HepG2 (cell line): ENCODE measurements at regions of chr6 and their contacts with region 1.

Region 1: DNA sequence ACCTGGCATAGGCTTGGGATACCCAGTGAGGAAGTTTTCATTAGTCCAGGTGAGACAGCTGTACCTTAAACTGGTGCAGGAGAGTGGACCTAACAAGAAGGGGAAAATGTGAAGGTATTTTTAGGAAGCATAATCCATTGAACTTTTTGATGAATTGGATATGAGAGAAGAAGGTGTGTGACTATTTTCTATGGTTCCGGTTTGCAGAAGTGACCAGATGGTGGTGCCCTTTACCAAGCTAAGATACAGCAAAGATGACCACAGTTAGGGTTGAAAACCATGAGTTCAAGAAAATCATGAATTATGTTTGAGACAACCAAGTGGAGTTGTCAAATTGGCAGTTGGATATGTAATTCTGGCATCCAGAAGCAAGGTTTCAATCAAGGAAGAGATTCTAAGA is 61.9 kb upstream of the NRSN1 start:
- DNase-seq: peak; percentile 62
- ATAC-seq: peak; percentile 92
- H3K4me3 ChIP-seq: no peak overlapping the region
- H3K27ac ChIP-seq: no peak overlapping the region
- H3K4me1 ChIP-seq: no peaks in the 10 kb centered on the region
- H3K27me3 ChIP-seq: no peaks in the 10 kb centered on the region
- CTCF ChIP-seq: peak; percentile 87
- EP300 ChIP-seq: no peak
- POLR2A ChIP-seq: no peak
- RAD21 ChIP-seq: peak; percentile 87

Region 2: GRCh38 chr6:24147511-24148149 is 83.5 kb after region 1 on chr6:
- CTCF ChIA-PET with region 1: no interaction called
- POLR2A ChIA-PET with region 1: no interaction called
- in situ Hi-C with region 1: no loop called
- intact Hi-C with region 1: loop called (anchors 5 kb)
- DNase-seq: no peak
- ATAC-seq: no peak
- H3K4me3 ChIP-seq: peak overlapping the region in 1 of 3 experiments; percentile 15; a peak in 1 of 6 replicates
- H3K27ac ChIP-seq: peak overlapping the region; percentile 84
- H3K4me1 ChIP-seq: peaks cover 55% of the 10 kb centered on the region
- H3K27me3 ChIP-seq: no peaks in the 10 kb centered on the region
- CTCF ChIP-seq: no peak
- EP300 ChIP-seq: no peak
- POLR2A ChIP-seq: no peak; a peak in 1 of 4 replicates
- RAD21 ChIP-seq: no peak

Region 3: GRCh38 chr6:24183596-24183995 is 119.5 kb after region 1 on chr6:
- CTCF ChIA-PET with region 1: no interaction called
- POLR2A ChIA-PET with region 1: no interaction called
- in situ Hi-C with region 1: no loop called
- intact Hi-C with region 1: no loop called
- DNase-seq: no peak
- ATAC-seq: no peak; the same call in 2 of the 3 replicates
- H3K4me3 ChIP-seq: no peak overlapping the region
- H3K27ac ChIP-seq: no peak overlapping the region
- H3K4me1 ChIP-seq: no peaks in the 10 kb centered on the region
- H3K27me3 ChIP-seq: no peaks in the 10 kb centered on the region
- CTCF ChIP-seq: no peak
- EP300 ChIP-seq: no peak
- POLR2A ChIP-seq: no peak
- RAD21 ChIP-seq: no peak

Region 4: GRCh38 chr6:24205020-24205492 is 141.0 kb after region 1 on chr6:
- CTCF ChIA-PET with region 1: interaction called, 42 read pairs
- POLR2A ChIA-PET with region 1: no interaction called
- in situ Hi-C with region 1: no loop called
- intact Hi-C with region 1: loop called (anchors 1 kb)
- DNase-seq: peak; percentile 59
- ATAC-seq: peak; percentile 99
- H3K4me3 ChIP-seq: peak overlapping the region in 1 of 3 experiments; percentile 18; a peak in 1 of 6 replicates
- H3K27ac ChIP-seq: peak overlapping the region; percentile 53
- H3K4me1 ChIP-seq: peaks cover 40% of the 10 kb centered on the region
- H3K27me3 ChIP-seq: no peaks in the 10 kb centered on the region
- CTCF ChIP-seq: peak; percentile 80
- EP300 ChIP-seq: 0 out of 4 replicates have a peak, but pooled peaks of 1 of the 2 experiments have one; percentile 3
- POLR2A ChIP-seq: no peak
- RAD21 ChIP-seq: peak; percentile 85

Region 5: DNA sequence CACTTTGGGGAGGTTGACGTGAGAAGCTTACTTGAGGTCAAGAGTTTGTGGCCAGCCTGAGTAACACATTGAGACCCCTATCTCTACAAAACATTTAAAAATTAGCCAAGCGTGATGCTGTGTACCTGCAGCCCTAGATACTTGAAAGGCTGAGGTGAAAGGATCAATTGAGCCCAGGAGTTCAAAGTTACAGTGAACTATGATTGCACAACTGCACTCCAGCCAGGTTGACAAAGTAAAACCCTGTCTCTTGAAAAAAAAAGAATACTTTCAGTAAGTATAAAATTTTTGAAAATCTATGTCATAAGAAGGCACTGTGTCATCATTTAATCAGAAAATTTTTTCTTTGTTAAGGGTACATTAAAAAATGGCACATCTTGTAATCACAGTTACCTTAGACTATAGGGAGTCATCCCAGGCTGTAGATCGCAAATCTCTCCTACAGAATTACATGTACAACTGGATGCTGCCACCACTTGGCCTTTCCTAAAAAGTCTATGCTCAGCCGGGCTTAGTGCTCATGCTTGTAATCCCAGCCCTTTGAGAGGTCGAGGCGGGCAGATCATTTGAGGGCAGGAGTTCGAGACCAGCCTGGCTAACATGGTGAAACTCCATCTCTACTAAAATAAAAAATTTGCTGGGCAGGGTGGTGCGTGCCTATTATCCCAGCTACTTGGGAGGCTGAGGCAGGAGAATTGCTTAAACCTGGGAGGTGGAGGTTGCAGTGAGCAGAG is 321.6 kb after region 1 on chr6:
- CTCF ChIA-PET with region 1: no interaction called
- POLR2A ChIA-PET with region 1: no interaction called
- in situ Hi-C with region 1: loop called (anchors 10 kb)
- intact Hi-C with region 1: loop called (anchors 5 kb)
- DNase-seq: peak; percentile 98
- ATAC-seq: peak; percentile 83
- H3K4me3 ChIP-seq: peak overlapping the region in 1 of 3 experiments; percentile 34; a peak in 1 of 6 replicates
- H3K27ac ChIP-seq: peak overlapping the region; percentile 79
- H3K4me1 ChIP-seq: peaks cover 84% of the 10 kb centered on the region
- H3K27me3 ChIP-seq: no peaks in the 10 kb centered on the region
- CTCF ChIP-seq: peak; percentile 87
- EP300 ChIP-seq: peak; percentile 94 to 98
- POLR2A ChIP-seq: no peak
- RAD21 ChIP-seq: peak; percentile 63

Region 6: DNA sequence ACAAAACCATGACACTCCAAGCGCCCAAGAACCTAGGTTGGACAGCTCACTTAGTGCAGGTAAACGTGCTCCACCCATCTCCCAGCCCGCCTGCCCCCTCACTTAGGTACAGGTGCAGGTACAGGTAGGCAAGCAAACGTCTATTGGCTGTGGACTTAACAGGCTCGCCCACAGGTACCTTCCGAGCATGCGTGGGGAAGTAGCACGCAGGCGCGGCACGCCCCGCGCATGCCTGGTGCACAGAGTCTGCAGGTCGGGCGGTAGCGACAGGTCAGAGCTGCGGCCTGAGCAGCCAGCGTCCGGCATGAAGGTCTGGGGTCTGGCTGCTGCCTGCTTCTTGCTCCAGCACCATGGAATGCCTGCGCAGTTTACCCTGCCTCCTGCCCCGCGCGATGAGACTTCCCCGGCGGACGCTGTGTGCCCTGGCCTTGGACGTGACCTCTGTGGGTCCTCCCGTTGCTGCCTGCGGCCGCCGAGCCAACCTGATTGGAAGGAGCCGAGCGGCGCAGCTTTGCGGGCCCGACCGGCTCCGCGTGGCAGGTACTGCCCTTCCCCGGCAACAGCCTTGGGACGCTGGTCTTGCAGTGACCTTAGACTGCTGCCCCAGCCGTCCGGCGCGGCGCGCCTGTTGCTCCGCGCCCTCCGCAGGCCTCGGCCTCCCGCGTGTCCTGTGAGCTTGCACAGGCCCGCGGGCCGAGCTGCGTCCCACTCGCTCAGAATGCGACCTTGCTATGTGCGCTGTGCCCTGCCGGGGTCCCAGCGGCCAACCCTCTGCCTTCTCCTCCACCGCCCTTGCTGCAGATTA is 338.8 kb after region 1 on chr6 and contains the start of gene MRS2:
- CTCF ChIA-PET with region 1: no interaction called
- POLR2A ChIA-PET with region 1: no interaction called
- in situ Hi-C with region 1: loop called (anchors 10 kb)
- intact Hi-C with region 1: loop called (anchors 5 kb)
- DNase-seq: peak; percentile 85
- ATAC-seq: peak; percentile 96
- H3K4me3 ChIP-seq: peak within 1 kb of the TSS; percentile 78 to 95 (median 83)
- H3K27ac ChIP-seq: peak within 1 kb of the TSS; percentile 79
- H3K4me1 ChIP-seq: peaks cover 71% of the 10 kb centered on the region
- H3K27me3 ChIP-seq: no peaks in the 10 kb centered on the region; a peak in 1 of 5 replicates
- CTCF ChIP-seq: peak; percentile 27; the same call in 1 of the 2 replicates
- EP300 ChIP-seq: no peak
- POLR2A ChIP-seq: peak; percentile 97 to 100
- RAD21 ChIP-seq: peak; percentile 68
- total RNA-seq, gene MRS2: 83.8 and 90.2 TPM in 2 replicates